ENCODE measurements at regions of chr2 and their contacts with region 1.

Region 1: DNA sequence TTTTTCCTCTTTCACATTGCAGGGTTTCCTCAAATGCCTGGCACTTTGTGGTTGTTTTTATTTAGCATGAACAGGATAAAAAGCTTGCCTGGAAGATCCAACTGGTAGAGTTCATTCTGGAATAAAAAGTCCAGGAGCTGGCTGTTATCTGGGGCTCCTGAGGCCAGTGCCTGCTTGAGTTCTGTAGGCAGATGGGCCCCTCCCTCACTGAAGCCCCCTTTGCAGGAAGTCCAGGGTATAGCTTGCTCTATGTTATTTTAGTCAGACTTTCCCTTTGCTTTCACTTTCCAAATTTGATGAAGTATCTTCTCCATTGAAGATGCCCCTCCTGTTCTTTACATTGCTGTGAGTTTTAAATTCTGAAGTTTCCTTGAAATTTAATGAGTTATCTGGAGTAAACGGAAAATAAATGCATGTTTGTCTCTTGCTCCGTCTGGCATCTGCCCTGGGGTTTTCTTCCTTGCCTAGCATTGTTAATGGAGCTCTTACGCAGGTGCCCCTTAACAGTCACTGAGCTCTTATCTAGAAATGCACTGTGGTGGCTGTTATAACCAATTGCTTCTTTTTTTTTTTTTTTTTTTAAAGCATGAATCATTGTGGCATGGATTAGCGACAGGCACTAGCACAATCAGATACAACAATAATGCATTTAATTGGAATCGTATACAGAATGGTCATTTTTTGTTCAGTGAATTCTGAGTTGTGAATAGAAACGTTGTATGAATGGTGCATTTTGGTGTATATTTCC is 27.0 kb upstream of the LPIN1 start:
- DNase-seq: peak in 1 of 4 experiments; percentile 41
- ATAC-seq: peak; percentile 45; the same call in 2 of the 3 replicates
- H3K4me3 ChIP-seq: no peak overlapping the region
- H3K27ac ChIP-seq: no peak overlapping the region
- H3K4me1 ChIP-seq: peaks cover 0 to 9% of the 10 kb centered on the region in 2 experiments; a peak in 4 of 5 replicates
- H3K27me3 ChIP-seq: peaks cover 25 to 61% of the 10 kb centered on the region in 2 experiments
- CTCF ChIP-seq: no peak
- EP300 ChIP-seq: no peak
- POLR2A ChIP-seq: no peak
- RAD21 ChIP-seq: no peak

Region 2: DNA sequence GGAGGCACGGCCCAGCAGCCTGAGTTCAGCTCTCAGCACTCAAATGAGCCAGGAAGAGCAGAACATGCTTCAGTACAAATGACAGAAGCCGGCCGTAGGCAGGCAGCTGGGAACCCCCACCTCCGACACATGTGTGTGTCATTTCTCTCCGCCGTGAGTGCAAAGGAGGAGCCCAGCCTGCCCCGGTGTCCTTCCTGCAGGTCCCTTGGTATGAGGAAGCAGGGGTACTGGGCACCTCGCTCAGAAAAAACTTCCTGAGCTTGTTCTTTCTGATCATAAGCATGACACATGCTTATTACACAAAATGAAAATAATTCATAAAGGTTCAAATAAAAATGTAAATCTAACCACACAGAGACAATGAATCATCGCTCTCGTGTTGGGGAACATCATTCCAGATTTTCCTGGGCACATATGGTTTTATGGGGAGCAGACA is 772.4 kb before region 1 on chr2:
- CTCF ChIA-PET with region 1: no interaction called
- POLR2A ChIA-PET with region 1: no interaction called
- in situ Hi-C with region 1: no loop called
- intact Hi-C with region 1: no loop called
- DNase-seq: no peak
- ATAC-seq: no peak
- H3K4me3 ChIP-seq: no peak overlapping the region
- H3K27ac ChIP-seq: no peak overlapping the region
- H3K4me1 ChIP-seq: no peaks in the 10 kb centered on the region
- H3K27me3 ChIP-seq: peaks cover 2 to 49% of the 10 kb centered on the region in 2 experiments; a peak in 2 of 5 replicates
- CTCF ChIP-seq: no peak
- EP300 ChIP-seq: no peak
- POLR2A ChIP-seq: no peak
- RAD21 ChIP-seq: no peak

Region 3: DNA sequence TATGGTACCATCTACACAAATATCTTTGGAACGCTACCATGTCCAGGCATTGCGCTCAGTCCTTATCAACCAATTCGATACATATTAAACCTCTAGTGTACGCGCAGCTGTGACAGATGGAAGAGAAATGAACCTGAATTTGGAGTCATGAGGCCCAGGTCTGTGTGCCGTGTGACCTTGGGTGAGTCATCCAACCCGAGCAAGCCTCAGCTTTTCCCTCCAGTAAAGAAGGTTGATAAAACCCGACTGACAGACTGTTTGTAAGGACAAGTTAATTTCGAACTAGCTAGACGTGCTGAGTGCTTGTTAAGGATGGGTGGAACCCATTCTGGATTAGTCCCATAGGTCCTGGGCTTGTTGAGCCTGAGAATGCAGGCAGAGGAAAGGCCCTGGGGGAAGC is 157.4 kb before region 1 on chr2:
- CTCF ChIA-PET with region 1: no interaction called
- POLR2A ChIA-PET with region 1: no interaction called
- in situ Hi-C with region 1: no loop called
- intact Hi-C with region 1: no loop called
- DNase-seq: peak in 2 of 4 experiments; percentile 40 to 46
- ATAC-seq: peak; percentile 65
- H3K4me3 ChIP-seq: no peak overlapping the region
- H3K27ac ChIP-seq: no peak overlapping the region
- H3K4me1 ChIP-seq: peaks cover 6 to 10% of the 10 kb centered on the region in 2 experiments; a peak in 3 of 5 replicates
- H3K27me3 ChIP-seq: peaks cover 37 to 56% of the 10 kb centered on the region in 2 experiments
- CTCF ChIP-seq: no peak
- EP300 ChIP-seq: no peak
- POLR2A ChIP-seq: no peak
- RAD21 ChIP-seq: no peak

Region 4: DNA sequence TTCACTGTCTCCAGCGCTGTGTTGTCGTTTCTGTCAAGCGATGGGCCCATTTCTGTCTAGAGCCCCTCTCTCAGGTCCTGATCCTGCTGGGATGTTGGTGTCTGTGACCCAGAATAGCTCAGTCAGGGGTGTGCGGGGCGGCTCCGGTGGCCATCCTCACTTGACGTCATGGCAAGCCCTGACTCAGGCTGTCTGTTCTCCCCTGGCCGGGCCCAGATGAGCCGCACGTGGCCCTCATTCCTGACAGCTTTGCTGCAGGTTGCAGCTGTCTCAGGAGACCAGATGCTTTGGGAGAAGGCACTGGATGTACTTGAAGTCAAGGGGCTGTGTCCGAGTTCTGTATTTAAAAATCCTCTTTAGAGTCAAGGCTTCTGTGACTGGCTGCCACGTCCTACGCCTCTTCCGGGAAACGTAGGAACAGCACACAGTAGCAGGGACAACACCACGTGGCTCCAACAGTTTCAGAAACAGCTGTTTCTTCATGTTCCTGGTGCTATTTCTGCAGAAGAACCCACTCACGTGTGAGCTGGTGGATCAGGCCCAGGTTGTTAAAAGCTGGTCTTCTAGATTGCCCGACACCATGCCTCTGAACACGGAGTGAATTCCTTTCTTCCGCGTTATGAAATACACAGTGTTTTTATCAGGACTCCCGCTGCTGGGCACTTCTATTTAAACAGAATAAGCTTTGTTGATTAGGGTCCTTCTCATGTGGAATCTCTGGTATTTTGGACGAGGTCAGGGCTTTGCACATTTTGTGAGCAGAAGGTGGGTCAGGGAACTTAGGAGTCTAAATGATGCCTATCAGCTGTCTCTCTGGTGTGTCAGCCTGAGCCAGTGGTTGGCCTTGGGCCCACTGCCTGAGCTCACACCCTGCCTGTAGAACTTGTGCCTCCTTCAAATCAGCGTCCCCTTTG is 21.1 kb before region 1 on chr2:
- CTCF ChIA-PET with region 1: no interaction called
- POLR2A ChIA-PET with region 1: interaction called, 11 read pairs
- in situ Hi-C with region 1: no loop called
- intact Hi-C with region 1: no loop called
- DNase-seq: no peak
- ATAC-seq: peak; percentile 20; the same call in 2 of the 3 replicates
- H3K4me3 ChIP-seq: no peak overlapping the region
- H3K27ac ChIP-seq: no peak overlapping the region
- H3K4me1 ChIP-seq: peaks cover 0 to 14% of the 10 kb centered on the region in 2 experiments; a peak in 2 of 5 replicates
- H3K27me3 ChIP-seq: 0 out of 5 replicates have a peak, but pooled peaks cover 0 to 6% of the 10 kb centered on the region in 2 experiments
- CTCF ChIP-seq: no peak
- EP300 ChIP-seq: no peak
- POLR2A ChIP-seq: no peak
- RAD21 ChIP-seq: no peak

Measured in K562 (cell line).